ENCODE measurements at regions of chr7 and their contacts with region 1.

Region 1: GRCh38 chr7:106870983-106871410 is 5.9 kb downstream of the PIK3CG start:
- DNase-seq: peak in 2 of 9 experiments; percentile 30 to 52
- ATAC-seq: peak; percentile 62
- H3K4me3 ChIP-seq: peak overlapping the region in 1 of 2 experiments; percentile 25
- H3K4me3 Mint-ChIP-seq: peak overlapping the region; percentile 55
- H3K27ac ChIP-seq: no peak overlapping the region
- H3K27ac Mint-ChIP-seq: peak overlapping the region; percentile 78
- H3K4me1 ChIP-seq: peaks cover 37% of the 10 kb centered on the region
- H3K4me1 Mint-ChIP-seq: peaks cover 81% of the 10 kb centered on the region
- H3K27me3 ChIP-seq: no peaks in the 10 kb centered on the region
- H3K27me3 Mint-ChIP-seq: no peaks in the 10 kb centered on the region
- CTCF ChIP-seq: no peak

Region 2: DNA sequence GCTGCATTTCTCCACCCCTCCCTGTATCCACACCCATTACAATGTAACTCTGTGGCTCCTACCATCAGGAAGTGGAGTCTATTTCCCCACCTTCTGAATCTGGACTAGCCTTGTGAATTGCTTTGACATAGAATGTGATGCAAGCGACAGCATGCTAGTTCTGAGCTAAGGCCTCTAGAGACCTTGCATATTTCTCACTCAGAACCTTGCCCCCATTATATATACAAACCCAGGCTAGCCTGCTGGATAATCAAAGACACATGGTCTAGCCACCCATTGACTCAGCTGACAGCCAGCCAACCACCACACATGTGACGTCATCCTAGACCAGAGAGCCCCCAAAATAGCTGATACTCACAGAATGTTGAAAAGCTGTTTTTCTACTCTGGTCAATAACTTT is 287.9 kb before region 1 on chr7:
- CTCF ChIA-PET with region 1: no interaction called
- POLR2A ChIA-PET with region 1: no interaction called
- intact Hi-C with region 1: no loop called
- DNase-seq: no peak
- ATAC-seq: no peak
- H3K4me3 ChIP-seq: no peak overlapping the region
- H3K4me3 Mint-ChIP-seq: no peak overlapping the region
- H3K27ac ChIP-seq: no peak overlapping the region
- H3K27ac Mint-ChIP-seq: no peak overlapping the region
- H3K4me1 ChIP-seq: no peaks in the 10 kb centered on the region
- H3K4me1 Mint-ChIP-seq: no peaks in the 10 kb centered on the region
- H3K27me3 ChIP-seq: no peaks in the 10 kb centered on the region
- H3K27me3 Mint-ChIP-seq: no peaks in the 10 kb centered on the region
- CTCF ChIP-seq: no peak

Region 3: DNA sequence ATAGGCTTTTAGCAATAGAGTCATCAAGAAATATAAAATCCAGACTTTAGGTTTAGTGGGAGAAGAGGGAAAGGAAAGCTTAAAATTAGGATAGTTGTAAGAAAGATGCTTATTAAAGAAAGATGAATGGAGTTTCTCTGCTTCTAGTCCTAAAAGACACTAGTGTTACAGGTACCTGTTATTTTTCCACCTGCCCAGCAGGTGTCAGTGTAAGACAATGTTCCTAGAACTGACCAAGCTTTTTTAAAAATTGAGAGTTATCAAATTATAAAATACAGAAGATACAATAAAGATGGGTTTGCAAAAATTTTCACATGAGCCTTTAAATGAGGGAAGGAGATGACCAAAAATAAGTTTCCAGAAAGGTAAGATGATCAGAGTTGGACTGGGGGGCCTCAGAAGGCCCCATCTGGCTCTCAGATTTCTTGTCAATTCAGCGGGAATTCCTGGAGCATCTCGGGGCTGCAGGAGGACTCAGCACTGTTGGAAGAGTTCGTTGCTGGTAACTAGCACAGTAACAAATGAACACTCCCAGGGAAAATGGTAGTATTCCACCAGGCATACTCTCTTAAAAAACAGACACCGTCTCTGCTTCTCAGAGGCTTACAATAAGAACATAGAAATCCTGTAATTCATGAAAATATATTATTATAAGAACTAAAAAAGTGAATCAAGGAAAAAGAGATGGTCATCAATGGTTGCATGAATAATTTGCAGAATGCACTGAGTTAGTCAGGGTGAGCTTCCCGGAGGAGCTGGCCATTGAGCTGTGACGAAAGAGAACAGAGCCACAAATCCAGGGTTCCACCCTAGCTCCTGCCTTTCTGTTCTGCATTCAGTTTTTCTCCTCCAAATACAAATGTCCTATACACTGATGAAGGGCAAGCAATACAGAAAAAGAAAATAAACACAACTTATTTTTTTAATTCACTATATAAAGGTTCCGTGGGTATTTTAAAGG is 77.7 kb before region 1 on chr7:
- CTCF ChIA-PET with region 1: no interaction called
- POLR2A ChIA-PET with region 1: no interaction called
- intact Hi-C with region 1: loop called (anchors 5 kb)
- DNase-seq: peak in 6 of 9 experiments; percentile 16 to 75 (median 42)
- ATAC-seq: peak; percentile 82
- H3K4me3 ChIP-seq: no peak overlapping the region
- H3K4me3 Mint-ChIP-seq: no peak overlapping the region
- H3K27ac ChIP-seq: no peak overlapping the region
- H3K27ac Mint-ChIP-seq: no peak overlapping the region
- H3K4me1 ChIP-seq: no peaks in the 10 kb centered on the region
- H3K4me1 Mint-ChIP-seq: peaks cover 3% of the 10 kb centered on the region
- H3K27me3 ChIP-seq: no peaks in the 10 kb centered on the region
- H3K27me3 Mint-ChIP-seq: no peaks in the 10 kb centered on the region
- CTCF ChIP-seq: peak; percentile 88

Region 4: DNA sequence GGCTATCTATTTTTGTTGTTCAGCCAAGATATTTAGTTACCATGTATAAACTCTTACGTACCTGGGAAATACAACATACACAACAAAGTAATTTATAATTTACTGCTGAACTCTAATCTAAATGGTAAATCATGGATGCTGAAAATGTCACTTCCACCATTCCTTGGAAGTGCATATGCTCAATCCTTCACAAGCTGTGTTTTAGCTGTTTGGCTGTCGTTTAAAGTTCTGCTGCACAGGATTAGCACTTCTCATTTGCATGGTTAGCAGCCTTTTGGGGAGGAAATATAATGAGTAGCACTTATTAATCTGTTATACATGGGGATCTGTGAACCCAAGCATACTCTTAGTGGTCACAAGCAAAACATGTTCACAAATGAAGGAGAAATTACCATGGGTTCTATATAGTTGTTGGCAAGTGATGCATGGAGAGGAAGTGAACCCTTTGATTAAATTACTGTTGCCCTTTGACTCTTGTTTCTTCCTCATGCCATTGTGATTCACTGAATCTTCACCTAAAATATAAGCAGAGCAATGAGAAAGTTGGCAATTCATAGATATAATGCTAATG is 12.5 kb after region 1 on chr7:
- CTCF ChIA-PET with region 1: no interaction called
- POLR2A ChIA-PET with region 1: interaction called, 3 read pairs
- intact Hi-C with region 1: loop called in 1 of 2 experiments (anchors 1 kb)
- DNase-seq: no peak
- ATAC-seq: no peak
- H3K4me3 ChIP-seq: no peak overlapping the region
- H3K4me3 Mint-ChIP-seq: no peak overlapping the region
- H3K27ac ChIP-seq: no peak overlapping the region
- H3K27ac Mint-ChIP-seq: peak overlapping the region; percentile 58
- H3K4me1 ChIP-seq: peaks cover under 1% of the 10 kb centered on the region
- H3K4me1 Mint-ChIP-seq: peaks cover 35% of the 10 kb centered on the region
- H3K27me3 ChIP-seq: no peaks in the 10 kb centered on the region
- H3K27me3 Mint-ChIP-seq: no peaks in the 10 kb centered on the region
- CTCF ChIP-seq: no peak

Measured in CD8-positive, alpha-beta T cell (primary cell).